Heart left ventricle (tissue), 16 donors: ENCODE measurements at regions of chr10 and their contacts with region 1.

Region 1: GRCh38 chr10:22325272-22326144 is 4.6 kb downstream of the BMI1 start:
- DNase-seq: peak; percentile 80 to 89 (median 85)
- ATAC-seq: peak in 3 of 4 donors; percentile 54 to 67 (median 55)
- H3K4me3 ChIP-seq: peak overlapping the region; percentile 28 to 76 (median 62)
- H3K27ac ChIP-seq: peak overlapping the region in 11 of 12 donors; percentile 48 to 77 (median 65)
- H3K4me1 ChIP-seq: peaks cover 0 to 42% (median 31%) of the 10 kb centered on the region in 12 donors
- H3K27me3 ChIP-seq: peaks cover 0 to 29% (median 0%) of the 10 kb centered on the region in 9 donors
- CTCF ChIP-seq: no peak
- POLR2A ChIP-seq: no peak

Region 2: DNA sequence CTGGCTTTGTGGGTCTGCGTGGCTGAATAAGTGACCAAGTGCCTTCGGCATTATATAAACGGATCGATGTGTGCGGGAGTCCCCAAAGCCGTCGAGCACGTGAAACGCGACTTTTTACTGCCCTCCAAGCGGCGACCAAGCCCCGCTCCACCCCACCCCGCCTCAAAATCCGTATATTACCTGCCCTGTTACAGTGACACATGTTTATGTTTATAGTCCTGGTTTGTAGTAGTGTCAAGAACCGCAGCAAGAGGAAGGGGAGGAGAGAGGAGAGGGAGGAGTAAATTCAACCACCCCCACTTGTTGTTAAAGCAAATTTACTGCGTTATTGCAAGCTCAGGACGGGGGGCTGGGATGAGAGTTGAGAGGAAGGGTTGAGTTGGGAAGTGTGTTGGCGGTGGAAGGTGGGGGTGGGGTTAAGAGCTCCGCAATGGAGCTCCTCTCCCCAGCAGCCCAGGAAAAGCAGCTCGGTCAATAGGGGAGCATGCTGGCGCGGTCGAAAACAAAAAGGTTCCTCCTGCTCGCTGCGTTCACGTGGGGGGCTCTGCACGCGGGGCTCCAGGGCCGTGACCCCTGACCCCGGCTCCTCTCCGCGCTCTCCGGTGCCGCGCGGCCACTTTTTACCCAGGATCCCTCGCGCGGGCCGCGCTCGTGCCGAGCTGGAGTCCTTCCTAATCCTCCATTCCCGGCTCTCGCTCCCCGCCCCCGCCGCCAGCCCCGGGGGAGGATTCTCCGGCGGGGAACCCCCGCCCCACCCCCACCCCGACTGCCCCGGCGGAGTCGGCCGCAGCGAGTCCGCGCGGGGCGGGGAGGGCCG is 799.9 kb before region 1 on chr10 and contains the start of gene SKIDA1:
- intact Hi-C with region 1: loop called in 2 of 10 experiments (anchors 5 to 10 kb)
- DNase-seq: peak; percentile 89 to 94 (median 92)
- ATAC-seq: peak; percentile 84 to 92 (median 88)
- H3K4me3 ChIP-seq: peak within 1 kb of the TSS; percentile 54 to 85 (median 71)
- H3K27ac ChIP-seq: peak within 1 kb of the TSS; percentile 95 to 99 (median 98)
- H3K4me1 ChIP-seq: peaks cover 0 to 25% (median 8%) of the 10 kb centered on the region in 12 donors
- H3K27me3 ChIP-seq: no peaks in the 10 kb centered on the region
- CTCF ChIP-seq: no peak
- POLR2A ChIP-seq: no peak
- total RNA-seq, gene SKIDA1: 2.3 to 5.4 (median 3.6) TPM

Region 3: DNA sequence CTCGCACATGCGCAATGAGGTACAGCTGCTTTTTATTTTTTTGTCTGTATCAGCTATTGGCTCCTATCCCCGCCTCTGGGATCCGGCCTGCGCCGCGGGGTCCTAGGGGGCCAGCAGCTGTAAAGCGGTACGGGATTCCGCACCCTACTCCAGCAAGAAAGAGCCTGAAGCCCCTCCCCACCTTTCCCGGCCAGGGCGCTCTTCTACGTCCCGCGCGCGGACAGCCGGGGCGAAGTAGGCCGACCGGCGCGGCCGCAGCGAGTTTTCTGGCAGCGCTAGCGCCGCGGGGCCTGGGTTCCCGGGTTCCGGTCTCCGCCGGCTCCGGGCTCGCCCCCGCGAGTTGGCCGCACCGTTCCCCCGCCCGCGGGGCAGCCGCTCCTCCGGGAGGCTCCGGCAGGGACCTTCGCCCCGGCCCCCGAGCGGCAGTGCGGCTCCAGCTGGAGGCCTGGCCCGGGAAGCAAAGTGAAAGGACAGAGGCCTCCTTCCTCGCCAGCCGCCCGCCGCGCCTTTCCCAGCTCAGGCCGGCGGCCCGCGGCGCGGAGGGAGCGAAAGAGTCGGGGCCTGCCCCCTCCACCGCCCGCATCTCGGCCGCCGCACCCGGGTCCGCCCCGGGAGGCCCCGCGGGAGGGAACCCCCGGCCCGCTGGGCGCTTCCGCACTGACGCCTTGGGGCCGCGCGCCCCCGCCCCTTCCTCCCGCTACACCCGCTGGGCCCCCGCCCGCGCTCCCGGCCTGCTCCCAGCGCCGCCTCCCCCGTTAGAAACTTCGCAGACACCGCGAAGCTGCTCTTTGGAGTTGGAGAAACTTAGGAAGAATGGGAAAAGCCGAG is 15.1 kb after region 1 on chr10:
- intact Hi-C with region 1: loop called in 2 of 10 experiments (anchors 2 kb)
- DNase-seq: peak; percentile 69 to 84 (median 72)
- ATAC-seq: peak; percentile 68 to 87 (median 86)
- H3K4me3 ChIP-seq: peak overlapping the region; percentile 62 to 94 (median 81)
- H3K27ac ChIP-seq: peak overlapping the region; percentile 81 to 97 (median 92)
- H3K4me1 ChIP-seq: peaks cover 8 to 37% (median 18%) of the 10 kb centered on the region in 12 donors
- H3K27me3 ChIP-seq: peaks cover 66 to 91% (median 84%) of the 10 kb centered on the region in 9 donors
- CTCF ChIP-seq: no peak
- POLR2A ChIP-seq: peak in 1 of 2 donors; percentile 57

Region 4: GRCh38 chr10:23067939-23068775 is 742.6 kb after region 1 on chr10:
- intact Hi-C with region 1: loop called in 1 of 10 experiments (anchors 10 kb)
- DNase-seq: peak; percentile 59 to 83 (median 66)
- ATAC-seq: peak; percentile 25 to 73 (median 68)
- H3K4me3 ChIP-seq: no peak overlapping the region
- H3K27ac ChIP-seq: no peak overlapping the region
- H3K4me1 ChIP-seq: peaks cover 0 to 23% (median 10%) of the 10 kb centered on the region in 12 donors
- H3K27me3 ChIP-seq: no peaks in the 10 kb centered on the region
- CTCF ChIP-seq: peak; percentile 70 to 90 (median 82)
- POLR2A ChIP-seq: no peak